Psoas muscle (tissue), 8 donors: ENCODE measurements at regions of chr1 and their contacts with region 1.

Region 1: GRCh38 chr1:41891199-41891896 is 27.4 kb downstream of the HIVEP3 start:
- DNase-seq: no peak
- ATAC-seq: peak; percentile 60 to 79 (median 68)
- H3K4me3 ChIP-seq: peak overlapping the region; percentile 59
- H3K27ac ChIP-seq: peak overlapping the region; percentile 70
- H3K4me1 ChIP-seq: peaks cover 38% of the 10 kb centered on the region
- H3K27me3 ChIP-seq: no peaks in the 10 kb centered on the region
- CTCF ChIP-seq: peak; percentile 18

Region 2: DNA sequence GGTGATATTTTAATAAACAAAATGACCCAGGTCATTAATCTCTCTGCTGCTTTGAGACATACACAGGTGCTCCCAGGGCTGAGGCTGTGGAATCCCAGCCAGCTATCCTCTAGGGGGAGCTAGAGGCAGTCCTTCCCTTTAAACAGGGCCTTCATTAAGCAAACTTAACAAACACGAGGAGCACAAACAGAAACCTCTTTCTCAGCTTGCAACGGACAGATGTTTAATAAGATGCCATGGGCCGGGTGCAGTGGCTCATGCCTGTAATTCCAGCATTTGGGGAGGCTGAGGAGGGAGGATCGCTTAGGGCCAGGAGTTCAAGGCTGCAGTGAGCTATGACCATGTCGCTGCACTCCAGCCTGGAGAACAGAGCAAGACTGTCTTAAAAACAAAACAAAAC is 79.3 kb before region 1 on chr1:
- intact Hi-C with region 1: loop called in 1 of 2 experiments (anchors 2 kb)
- DNase-seq: peak in 1 of 2 donors; percentile 28
- ATAC-seq: peak in 3 of 4 donors; percentile 37 to 60 (median 37)
- H3K4me3 ChIP-seq: no peak overlapping the region
- H3K27ac ChIP-seq: no peak overlapping the region
- H3K4me1 ChIP-seq: peaks cover 30% of the 10 kb centered on the region
- H3K27me3 ChIP-seq: no peaks in the 10 kb centered on the region
- CTCF ChIP-seq: peak; percentile 55

Region 3: GRCh38 chr1:41980827-41981653 is 89.7 kb after region 1 on chr1:
- intact Hi-C with region 1: no loop called
- DNase-seq: no peak
- ATAC-seq: no peak
- H3K4me3 ChIP-seq: no peak overlapping the region
- H3K27ac ChIP-seq: no peak overlapping the region
- H3K4me1 ChIP-seq: no peaks in the 10 kb centered on the region
- H3K27me3 ChIP-seq: no peaks in the 10 kb centered on the region
- CTCF ChIP-seq: no peak